Sigmoid colon (tissue), 7 donors: ENCODE measurements at regions of chr2 and their contacts with region 1.

Region 1: GRCh38 chr2:49619802-49620201 is 465.5 kb upstream of the FSHR start:
- DNase-seq: no peak
- H3K4me3 ChIP-seq: no peak overlapping the region
- H3K27ac ChIP-seq: no peak overlapping the region
- H3K4me1 ChIP-seq: no peaks in the 10 kb centered on the region
- H3K27me3 ChIP-seq: no peaks in the 10 kb centered on the region
- CTCF ChIP-seq: no peak
- EP300 ChIP-seq: no peak
- POLR2A ChIP-seq: no peak

Region 2: GRCh38 chr2:49857371-49858112 is 237.7 kb after region 1 on chr2:
- intact Hi-C with region 1: loop called (anchors 5 kb)
- DNase-seq: no peak
- H3K4me3 ChIP-seq: no peak overlapping the region
- H3K27ac ChIP-seq: no peak overlapping the region
- H3K4me1 ChIP-seq: no peaks in the 10 kb centered on the region
- H3K27me3 ChIP-seq: no peaks in the 10 kb centered on the region
- CTCF ChIP-seq: no peak
- EP300 ChIP-seq: no peak
- POLR2A ChIP-seq: no peak

Region 3: DNA sequence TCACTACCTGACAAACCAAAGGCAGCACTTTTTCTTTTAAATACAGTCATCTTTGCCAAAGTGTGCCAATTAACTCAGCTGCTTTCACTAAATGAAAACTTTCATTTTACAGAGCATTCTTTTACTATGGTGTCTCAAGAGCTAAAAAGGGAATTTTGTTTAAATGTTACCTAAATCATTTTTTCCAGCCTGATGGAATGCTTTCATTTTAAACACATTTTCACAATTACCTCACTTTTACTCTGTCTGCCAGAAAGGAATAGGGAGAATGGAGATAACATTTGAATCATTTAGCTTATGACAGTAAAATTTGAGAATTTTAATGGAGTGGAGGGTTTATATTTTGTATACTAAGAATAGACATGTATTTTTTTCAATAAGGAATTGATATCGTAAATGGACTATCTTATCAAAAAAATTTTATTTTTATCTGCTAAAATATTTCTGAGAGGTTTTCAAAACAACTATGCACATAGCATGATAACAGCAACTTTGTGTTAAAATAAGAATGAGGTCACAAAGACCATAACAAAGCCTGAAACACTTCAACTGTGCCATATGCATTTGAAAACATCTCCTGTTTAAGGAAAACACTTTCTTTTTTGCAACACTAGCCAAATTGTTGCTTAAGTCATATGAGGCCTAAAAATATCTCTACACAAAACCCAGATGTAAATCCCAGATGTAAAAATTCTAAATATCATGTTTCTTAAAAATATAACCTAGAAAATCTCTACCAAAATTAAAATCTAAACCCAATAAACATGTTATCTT is 304.4 kb after region 1 on chr2:
- intact Hi-C with region 1: no loop called
- DNase-seq: no peak
- H3K4me3 ChIP-seq: no peak overlapping the region
- H3K27ac ChIP-seq: no peak overlapping the region
- H3K4me1 ChIP-seq: no peaks in the 10 kb centered on the region
- H3K27me3 ChIP-seq: no peaks in the 10 kb centered on the region
- CTCF ChIP-seq: no peak
- EP300 ChIP-seq: no peak
- POLR2A ChIP-seq: no peak